Sigmoid colon (tissue), 7 donors: ENCODE measurements at regions of chr5 and their contacts with region 1.

Region 1: DNA sequence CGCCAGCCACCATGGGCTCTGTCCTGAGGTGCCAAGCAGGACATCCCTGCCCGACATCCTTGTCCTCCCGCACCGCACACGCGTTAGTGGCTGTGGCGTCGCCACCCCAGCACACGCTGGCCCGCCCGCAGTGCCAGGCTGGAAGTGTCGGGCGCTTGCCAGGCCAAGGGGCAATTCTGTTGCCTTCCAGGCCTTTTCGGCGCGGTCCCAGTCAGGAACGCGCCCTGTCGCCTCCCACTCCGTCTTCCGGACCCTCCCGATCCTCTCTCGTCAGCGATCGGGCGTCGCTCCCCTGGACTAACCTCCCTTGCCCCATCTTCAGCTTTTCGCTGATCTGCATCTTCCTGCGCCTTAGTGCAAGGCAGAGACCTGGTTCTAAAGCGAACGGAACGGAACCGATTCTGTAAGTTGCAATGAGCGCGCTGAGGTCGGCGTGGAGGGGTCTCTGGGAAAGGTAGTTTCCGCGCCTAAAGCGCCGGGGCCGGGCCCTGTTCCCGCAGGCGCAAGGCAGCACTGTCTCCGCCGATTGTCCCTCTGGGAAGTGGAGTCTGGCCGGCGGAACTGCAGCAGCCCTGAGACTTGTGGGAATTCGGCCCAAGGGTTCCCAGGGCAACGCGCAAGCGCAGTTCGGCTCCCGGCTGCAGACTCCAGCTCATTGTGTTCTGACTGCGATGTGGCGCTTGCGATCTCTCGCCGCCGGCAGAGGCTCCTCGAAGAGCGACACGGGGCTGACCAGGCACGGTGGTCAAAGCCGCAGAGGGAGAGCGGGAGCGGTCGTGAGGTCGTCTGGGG is at the start of gene ZNF454:
- DNase-seq: peak; percentile 97
- H3K4me3 ChIP-seq: peak within 1 kb of the TSS; percentile 62 to 69 (median 67)
- H3K27ac ChIP-seq: peak within 1 kb of the TSS; percentile 82 to 89 (median 86)
- H3K4me1 ChIP-seq: peaks cover 0 to 17% (median 9%) of the 10 kb centered on the region in 4 donors
- H3K27me3 ChIP-seq: no peaks in the 10 kb centered on the region
- CTCF ChIP-seq: no peak
- EP300 ChIP-seq: no peak
- POLR2A ChIP-seq: peak in 1 of 2 donors; percentile 8
- total RNA-seq, gene ZNF454: 2.0 to 6.1 (median 3.4) TPM

Region 2: DNA sequence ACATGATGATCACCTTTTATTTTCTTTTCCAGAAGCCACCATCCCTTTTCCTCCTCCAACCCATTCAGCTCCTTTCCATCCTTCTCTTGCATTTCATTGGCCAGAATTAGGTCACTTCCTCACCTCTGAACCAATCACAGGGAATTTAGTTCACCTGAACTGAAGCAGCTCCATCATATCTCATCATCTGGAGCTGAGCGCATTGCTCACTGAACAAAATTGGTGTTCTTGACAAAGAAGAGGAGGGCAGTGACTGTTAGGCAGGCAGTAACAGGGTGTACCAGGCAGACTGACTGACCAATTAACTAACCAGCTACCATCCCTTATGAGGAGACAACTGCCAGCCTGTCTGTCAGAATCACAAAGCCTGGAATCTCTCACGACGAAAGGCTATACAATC is 208.5 kb before region 1 on chr5:
- intact Hi-C with region 1: loop called (anchors 5 kb)
- DNase-seq: no peak
- H3K4me3 ChIP-seq: no peak overlapping the region
- H3K27ac ChIP-seq: no peak overlapping the region
- H3K4me1 ChIP-seq: peaks cover 0 to 12% (median 7%) of the 10 kb centered on the region in 4 donors
- H3K27me3 ChIP-seq: no peaks in the 10 kb centered on the region
- CTCF ChIP-seq: no peak
- EP300 ChIP-seq: no peak
- POLR2A ChIP-seq: no peak

Region 3: GRCh38 chr5:178859625-178860531 is 80.9 kb before region 1 on chr5 and contains the start of gene ZNF354B:
- intact Hi-C with region 1: loop called (anchors 5 kb)
- DNase-seq: peak; percentile 94
- H3K4me3 ChIP-seq: peak within 1 kb of the TSS; percentile 63 to 98 (median 78)
- H3K27ac ChIP-seq: peak within 1 kb of the TSS; percentile 86 to 92 (median 87)
- H3K4me1 ChIP-seq: peaks cover 0 to 21% (median 14%) of the 10 kb centered on the region in 4 donors
- H3K27me3 ChIP-seq: no peaks in the 10 kb centered on the region
- CTCF ChIP-seq: no peak
- EP300 ChIP-seq: no peak
- POLR2A ChIP-seq: peak; percentile 34 to 42
- total RNA-seq, gene ZNF354B: 13.3 to 23.5 (median 18.6) TPM

Region 4: GRCh38 chr5:178895651-178896571 is 44.9 kb before region 1 on chr5 and contains the start of gene ZFP2:
- intact Hi-C with region 1: loop called (anchors 5 kb)
- DNase-seq: peak; percentile 72
- H3K4me3 ChIP-seq: peak within 1 kb of the TSS; percentile 80 to 95 (median 86)
- H3K27ac ChIP-seq: peak within 1 kb of the TSS; percentile 80 to 85 (median 82)
- H3K4me1 ChIP-seq: peaks cover 0 to 14% (median 6%) of the 10 kb centered on the region in 4 donors
- H3K27me3 ChIP-seq: no peaks in the 10 kb centered on the region
- CTCF ChIP-seq: no peak
- EP300 ChIP-seq: no peak
- POLR2A ChIP-seq: no peak
- total RNA-seq, gene ZFP2: 3.5 to 5.4 (median 3.9) TPM

Region 5: GRCh38 chr5:179023528-179024430 is 83.0 kb after region 1 on chr5 and contains the start of gene ZNF879:
- intact Hi-C with region 1: loop called (anchors 2 kb)
- DNase-seq: peak; percentile 97
- H3K4me3 ChIP-seq: peak within 1 kb of the TSS; percentile 43 to 97 (median 86)
- H3K27ac ChIP-seq: peak within 1 kb of the TSS; percentile 84 to 89 (median 88)
- H3K4me1 ChIP-seq: peaks cover 0 to 11% (median 8%) of the 10 kb centered on the region in 4 donors
- H3K27me3 ChIP-seq: no peaks in the 10 kb centered on the region
- CTCF ChIP-seq: no peak
- EP300 ChIP-seq: no peak
- POLR2A ChIP-seq: no peak
- total RNA-seq, gene ZNF879: 2.8 to 6.3 (median 4.7) TPM

Region 6: GRCh38 chr5:179060116-179061008 is 119.6 kb after region 1 on chr5 and contains the start of gene ZNF354C:
- intact Hi-C with region 1: loop called (anchors 1 kb)
- DNase-seq: peak; percentile 93
- H3K4me3 ChIP-seq: peak within 1 kb of the TSS; percentile 55 to 95 (median 88)
- H3K27ac ChIP-seq: peak within 1 kb of the TSS; percentile 78 to 86 (median 84)
- H3K4me1 ChIP-seq: peaks cover 0 to 12% (median 12%) of the 10 kb centered on the region in 4 donors
- H3K27me3 ChIP-seq: no peaks in the 10 kb centered on the region
- CTCF ChIP-seq: no peak
- EP300 ChIP-seq: no peak
- POLR2A ChIP-seq: peak in 1 of 2 donors; percentile 14
- total RNA-seq, gene ZNF354C: 7.7 to 12.1 (median 10.1) TPM